Right cardiac atrium (tissue), 5 donors: ENCODE measurements at regions of chr10 and their contacts with region 1.

Region 1: GRCh38 chr10:5813287-5814109 is at the start of gene GDI2:
- DNase-seq: peak; percentile 96 to 98 (median 98)
- ATAC-seq: peak; percentile 99
- H3K4me3 ChIP-seq: peak within 1 kb of the TSS; percentile 79
- H3K27ac ChIP-seq: peak within 1 kb of the TSS; percentile 99
- H3K4me1 ChIP-seq: no peaks in the 10 kb centered on the region
- H3K27me3 ChIP-seq: no peaks in the 10 kb centered on the region
- total RNA-seq, gene GDI2: 97.7 to 111 (median 105) TPM

Region 2: DNA sequence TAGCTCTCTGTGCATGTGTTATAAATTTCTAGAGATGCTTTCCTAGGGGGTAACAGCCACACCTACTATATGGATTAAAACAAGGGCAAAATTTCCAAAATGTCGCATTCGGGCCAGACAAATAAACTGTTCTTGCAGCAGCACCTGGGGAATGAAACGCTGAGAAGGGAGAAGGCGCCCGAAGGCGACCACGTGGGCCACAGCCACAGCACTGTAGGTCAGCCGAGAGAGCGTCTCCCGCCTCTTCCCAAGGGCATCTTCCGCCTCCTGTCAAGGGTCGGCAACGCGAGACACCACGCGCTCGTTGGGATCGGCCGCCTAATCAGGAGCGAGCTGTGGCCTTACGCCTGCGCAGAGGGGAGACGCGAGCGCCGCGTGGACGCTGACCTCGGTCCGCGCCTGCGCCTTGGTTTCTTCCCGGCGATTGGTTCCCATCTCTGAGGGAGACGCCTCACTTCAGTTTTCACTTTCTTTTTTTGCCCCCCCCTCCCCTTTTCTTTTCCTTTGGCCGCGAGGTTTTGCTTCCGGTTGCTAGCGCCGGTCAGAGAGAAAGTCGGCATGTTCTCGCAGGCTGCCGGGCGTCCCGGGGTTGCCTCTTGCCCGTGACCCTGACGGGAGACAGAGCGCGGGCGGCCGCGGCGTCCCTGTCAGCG is 129.1 kb before region 1 on chr10 and contains the start of gene TASOR2:
- intact Hi-C with region 1: no loop called
- DNase-seq: peak; percentile 99 to 100 (median 99)
- ATAC-seq: peak; percentile 98
- H3K4me3 ChIP-seq: peak within 1 kb of the TSS; percentile 80
- H3K27ac ChIP-seq: peak within 1 kb of the TSS; percentile 79
- H3K4me1 ChIP-seq: no peaks in the 10 kb centered on the region
- H3K27me3 ChIP-seq: no peaks in the 10 kb centered on the region
- total RNA-seq, gene TASOR2: 41.1 to 51.7 (median 49.3) TPM

Region 3: DNA sequence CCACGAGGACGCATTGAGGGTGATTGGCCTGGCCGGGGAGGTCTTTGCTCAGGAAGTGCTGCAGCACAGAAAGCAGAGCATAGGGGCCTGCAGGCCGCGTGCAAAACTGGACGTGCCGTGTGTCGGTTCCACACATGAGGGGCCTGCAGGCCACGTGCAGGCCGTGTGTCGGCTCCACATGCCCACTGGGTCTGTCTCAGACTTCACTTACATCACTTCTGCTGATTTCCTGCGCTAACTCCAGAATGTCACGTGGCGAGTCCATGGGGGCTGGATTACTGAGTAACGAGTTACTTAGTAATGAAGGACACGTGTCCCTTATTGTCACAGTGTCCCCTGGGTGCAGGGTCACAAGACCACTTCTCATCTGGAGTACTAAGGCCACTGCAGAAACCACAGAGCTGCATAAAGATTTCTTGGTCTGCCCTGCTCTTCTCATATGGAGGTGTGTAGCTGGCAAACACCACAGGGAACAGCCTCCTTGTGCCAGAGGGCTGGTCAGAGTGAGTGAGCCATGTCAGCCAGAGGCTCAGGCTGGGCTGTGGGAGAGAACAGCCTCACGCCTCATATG is 61.1 kb before region 1 on chr10:
- intact Hi-C with region 1: loop called in 1 of 4 experiments (anchors 10 kb)
- DNase-seq: no peak
- ATAC-seq: peak; percentile 29 to 39
- H3K4me3 ChIP-seq: no peak overlapping the region
- H3K27ac ChIP-seq: no peak overlapping the region
- H3K4me1 ChIP-seq: no peaks in the 10 kb centered on the region
- H3K27me3 ChIP-seq: no peaks in the 10 kb centered on the region

Region 4: DNA sequence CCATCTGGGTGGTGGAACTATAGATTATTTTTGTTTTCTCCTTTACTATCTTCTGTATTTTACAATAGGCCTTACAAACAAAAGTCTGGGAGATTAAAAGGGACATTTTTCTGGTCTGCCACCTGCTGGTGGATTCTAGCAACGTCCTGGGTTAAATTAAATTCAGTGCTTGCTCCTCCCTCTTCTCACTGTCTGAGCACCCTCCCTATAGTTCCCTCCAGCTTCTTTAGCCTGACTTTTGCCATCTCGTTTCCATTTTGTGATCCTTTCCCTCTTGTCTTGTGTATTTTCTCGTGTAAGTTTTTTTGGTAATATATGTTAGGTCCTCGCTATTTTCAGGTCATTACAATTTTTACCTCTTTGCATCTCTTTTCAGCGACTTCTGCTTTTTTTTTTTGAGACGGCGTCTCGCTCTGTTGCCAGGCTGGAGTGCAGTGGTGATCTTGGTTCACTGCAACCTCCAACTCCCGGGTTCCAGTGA is 60.1 kb after region 1 on chr10:
- intact Hi-C with region 1: loop called in 1 of 4 experiments (anchors 10 kb)
- DNase-seq: peak; percentile 39 to 73 (median 62)
- ATAC-seq: peak; percentile 78 to 85
- H3K4me3 ChIP-seq: no peak overlapping the region
- H3K27ac ChIP-seq: no peak overlapping the region
- H3K4me1 ChIP-seq: no peaks in the 10 kb centered on the region
- H3K27me3 ChIP-seq: no peaks in the 10 kb centered on the region

Region 5: GRCh38 chr10:5889624-5890451 is 76.3 kb after region 1 on chr10 and contains the starts of genes ANKRD16 and FBH1:
- intact Hi-C with region 1: loop called in 1 of 4 experiments (anchors 5 kb)
- DNase-seq: peak; percentile 99 to 100 (median 99)
- ATAC-seq: peak; percentile 97
- H3K4me3 ChIP-seq: peak within 1 kb of the TSS; percentile 95
- H3K27ac ChIP-seq: peak within 1 kb of the TSS; percentile 83
- H3K4me1 ChIP-seq: peaks cover 5% of the 10 kb centered on the region
- H3K27me3 ChIP-seq: no peaks in the 10 kb centered on the region
- total RNA-seq, gene ANKRD16: 3.6 to 4.3 (median 4.0) TPM
- total RNA-seq, gene FBH1: 75.6 to 82.1 (median 77.4) TPM

Region 6: GRCh38 chr10:6045314-6045848 is 231.9 kb after region 1 on chr10:
- intact Hi-C with region 1: no loop called
- DNase-seq: no peak
- ATAC-seq: no peak
- H3K4me3 ChIP-seq: no peak overlapping the region
- H3K27ac ChIP-seq: no peak overlapping the region
- H3K4me1 ChIP-seq: no peaks in the 10 kb centered on the region
- H3K27me3 ChIP-seq: no peaks in the 10 kb centered on the region

Region 7: GRCh38 chr10:6108603-6109443 is 295.3 kb after region 1 on chr10:
- intact Hi-C with region 1: no loop called
- DNase-seq: no peak
- ATAC-seq: peak in 1 of 2 donors; percentile 28
- H3K4me3 ChIP-seq: no peak overlapping the region
- H3K27ac ChIP-seq: no peak overlapping the region
- H3K4me1 ChIP-seq: no peaks in the 10 kb centered on the region
- H3K27me3 ChIP-seq: no peaks in the 10 kb centered on the region